ENCODE measurements at regions of chr11 and their contacts with region 1.

Region 1: DNA sequence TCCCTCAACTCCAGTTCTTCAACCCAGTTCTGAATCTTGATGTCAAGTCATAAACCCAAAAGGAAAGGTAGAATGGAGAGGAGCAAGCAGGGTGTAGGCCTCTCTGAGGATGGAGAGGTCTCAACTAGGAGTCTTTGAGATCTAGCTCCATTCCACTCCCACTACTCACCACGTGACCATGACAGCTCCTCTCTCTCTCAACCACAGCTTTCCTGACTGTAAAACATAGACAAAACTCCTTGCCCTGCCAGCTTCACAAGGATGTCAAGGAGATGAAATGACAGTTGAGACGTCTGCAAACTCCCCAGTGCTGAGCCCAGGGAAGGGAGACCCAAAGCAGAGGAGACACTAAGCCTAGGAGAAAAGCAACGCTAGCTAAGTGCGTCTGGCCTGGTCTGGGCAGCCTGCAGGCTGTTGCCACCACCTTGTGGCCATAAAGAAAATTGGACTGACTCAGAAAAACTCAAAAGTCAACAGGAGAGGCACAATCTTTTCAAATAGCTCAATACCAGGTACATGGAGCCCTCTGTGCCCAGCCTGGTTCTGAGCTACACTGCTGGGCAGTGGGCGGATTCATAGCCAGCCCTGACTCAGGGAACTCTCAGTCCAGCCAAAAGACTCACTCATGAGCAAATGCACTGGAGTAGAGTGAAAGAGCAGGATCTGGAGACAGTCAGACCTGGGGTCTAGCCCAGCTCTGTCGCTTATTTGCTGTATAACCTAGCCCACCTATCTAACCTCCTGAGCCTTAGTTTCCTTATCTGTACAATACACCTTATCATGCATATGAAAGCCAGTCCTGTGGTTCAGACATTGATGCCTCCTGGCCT is 3.4 kb downstream of the CLPB start:
- DNase-seq: no peak
- ATAC-seq: peak; percentile 27

Region 2: DNA sequence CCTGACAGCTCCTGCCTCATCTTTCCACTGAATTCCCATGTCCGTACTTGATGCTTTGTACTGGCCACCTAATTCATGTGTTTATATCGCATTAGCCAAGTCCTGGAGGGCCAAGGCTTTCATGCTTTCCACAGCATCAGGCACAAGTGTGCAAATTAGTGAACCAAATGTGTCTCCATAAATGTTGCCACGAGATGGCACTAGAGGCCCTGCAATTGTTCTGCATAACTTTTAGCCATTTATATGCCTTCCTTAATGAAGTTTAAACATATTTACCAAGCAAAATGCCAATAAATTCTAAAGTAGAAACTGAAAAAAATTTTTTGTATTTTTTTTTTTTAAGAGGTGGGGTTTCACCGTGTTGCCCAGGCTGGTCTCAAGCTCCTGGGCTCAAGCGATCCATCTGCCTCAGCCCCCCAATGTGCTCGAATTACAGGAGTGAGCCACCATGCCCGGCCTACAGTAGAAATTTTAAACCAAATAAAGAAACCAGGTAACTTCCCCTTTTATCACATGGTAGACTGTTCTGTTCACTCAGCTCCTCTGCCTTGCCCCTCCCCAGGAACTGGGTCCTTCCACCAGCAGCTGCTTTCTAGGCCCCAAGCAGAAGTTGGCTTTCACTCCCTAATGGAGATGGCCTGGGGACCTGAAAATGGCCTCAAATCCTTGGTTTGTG is 453.1 kb before region 1 on chr11:
- intact Hi-C with region 1: loop called (anchors 5 kb)
- DNase-seq: no peak
- ATAC-seq: peak; percentile 54

Region 3: DNA sequence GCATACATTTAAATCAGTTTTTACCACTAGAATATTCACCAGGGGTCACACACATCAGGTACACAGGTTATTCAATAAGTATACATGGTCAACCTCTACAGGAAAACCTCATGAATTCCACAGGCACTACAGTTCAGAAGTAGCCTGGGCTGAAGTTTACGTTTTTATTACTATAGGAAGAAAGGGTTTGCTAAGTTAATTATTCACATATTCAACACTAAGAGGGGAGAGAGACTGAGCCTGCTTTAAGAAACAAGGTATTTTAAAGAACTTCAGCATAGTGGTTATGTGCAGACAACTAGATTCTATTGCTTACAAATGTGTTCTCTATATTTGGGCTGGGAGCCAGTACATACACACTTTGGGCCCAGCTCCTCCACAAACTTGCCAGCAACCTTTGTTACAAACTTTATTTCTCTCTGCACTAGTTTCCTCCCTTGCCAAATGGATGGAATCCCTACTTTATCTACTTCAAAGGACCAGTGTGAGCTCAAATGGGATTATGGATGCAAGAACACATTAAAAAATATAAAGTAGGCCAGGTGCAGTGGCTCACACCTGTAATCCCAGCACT is 400.4 kb before region 1 on chr11:
- intact Hi-C with region 1: loop called (anchors 5 kb)
- DNase-seq: no peak
- ATAC-seq: no peak

Region 4: DNA sequence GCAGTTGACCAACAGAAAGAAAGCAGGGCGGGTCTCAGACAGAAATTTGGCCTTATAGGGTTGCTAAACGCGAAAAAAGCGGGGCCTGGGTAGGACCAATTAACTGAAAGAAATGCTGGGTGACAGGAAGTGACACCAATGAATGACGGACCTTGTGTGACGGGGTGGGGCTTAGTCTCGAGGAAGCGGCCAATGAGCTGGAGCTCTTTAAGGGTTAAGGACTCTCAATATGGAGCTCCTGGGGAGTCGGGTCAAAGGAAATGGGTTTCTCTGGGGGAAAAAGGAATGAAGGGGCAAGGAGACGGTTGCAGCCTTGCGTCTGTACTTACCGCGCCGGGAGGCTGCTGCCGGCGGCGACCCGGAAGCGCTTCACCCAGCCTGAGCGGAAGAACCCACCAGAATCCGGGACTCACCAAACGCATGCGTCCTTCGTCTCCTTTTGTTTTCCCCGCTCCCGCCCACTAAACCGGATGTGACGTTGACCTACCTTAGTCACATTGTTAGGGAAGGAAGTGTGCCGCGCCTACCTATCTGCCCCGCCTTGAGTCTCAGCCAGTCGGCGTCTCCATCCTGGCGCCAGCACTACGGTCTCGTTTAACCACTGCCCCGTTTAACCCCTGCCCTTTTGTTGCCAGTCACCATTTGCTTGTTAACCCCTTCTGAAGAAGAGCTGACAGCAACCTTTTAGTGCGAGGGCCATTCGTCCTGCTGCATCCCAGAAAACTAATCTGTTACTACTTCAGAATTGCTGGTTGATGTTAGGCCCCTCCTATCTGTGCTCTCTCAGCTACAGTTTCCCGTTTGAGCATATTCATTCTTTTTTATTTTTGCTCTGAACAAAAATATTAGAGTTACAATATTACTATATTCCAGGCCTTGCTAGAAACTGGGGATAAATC is 318.4 kb before region 1 on chr11 and contains the start of gene ANAPC15:
- intact Hi-C with region 1: loop called (anchors 10 kb)
- DNase-seq: peak; percentile 98
- ATAC-seq: peak; percentile 94
- total RNA-seq, gene ANAPC15: 46.1 TPM

Region 5: GRCh38 chr11:72239849-72240460 is 191.0 kb before region 1 on chr11:
- intact Hi-C with region 1: loop called (anchors 5 kb)
- DNase-seq: peak; percentile 86
- ATAC-seq: peak; percentile 47

Region 6: GRCh38 chr11:72413914-72414628 is 16.9 kb before region 1 on chr11:
- intact Hi-C with region 1: no loop called
- DNase-seq: peak; percentile 93
- ATAC-seq: peak; percentile 79